ENCODE measurements at regions of chr2 and their contacts with region 1.

Region 1: GRCh38 chr2:102020596-102021181 is 28.9 kb downstream of the IL1R2 start:
- DNase-seq: peak; percentile 83
- H3K4me3 ChIP-seq: no peak overlapping the region
- H3K27ac ChIP-seq: no peak overlapping the region
- H3K4me1 ChIP-seq: no peaks in the 10 kb centered on the region
- H3K27me3 ChIP-seq: no peaks in the 10 kb centered on the region
- CTCF ChIP-seq: peak; percentile 95 to 97
- POLR2A ChIP-seq: no peak

Region 2: GRCh38 chr2:101770726-101771125 is 250.0 kb before region 1 on chr2:
- CTCF ChIA-PET with region 1: no interaction called
- POLR2A ChIA-PET with region 1: no interaction called
- dilution Hi-C with region 1: no loop called
- intact Hi-C with region 1: no loop called
- DNase-seq: peak; percentile 58
- H3K4me3 ChIP-seq: no peak overlapping the region
- H3K27ac ChIP-seq: peak overlapping the region; percentile 5
- H3K4me1 ChIP-seq: peaks cover 68% of the 10 kb centered on the region
- H3K27me3 ChIP-seq: no peaks in the 10 kb centered on the region
- CTCF ChIP-seq: peak in 1 of 2 donors; percentile 28
- POLR2A ChIP-seq: no peak

Region 3: GRCh38 chr2:101998896-101999789 is 21.5 kb before region 1 on chr2:
- CTCF ChIA-PET with region 1: interaction called, 20 read pairs
- POLR2A ChIA-PET with region 1: no interaction called
- dilution Hi-C with region 1: no loop called
- intact Hi-C with region 1: no loop called
- DNase-seq: no peak
- H3K4me3 ChIP-seq: no peak overlapping the region
- H3K27ac ChIP-seq: no peak overlapping the region
- H3K4me1 ChIP-seq: no peaks in the 10 kb centered on the region
- H3K27me3 ChIP-seq: peaks cover 9 to 10% of the 10 kb centered on the region in 2 experiments
- CTCF ChIP-seq: no peak
- POLR2A ChIP-seq: no peak

Region 4: GRCh38 chr2:102063941-102064678 is 43.4 kb after region 1 on chr2:
- CTCF ChIA-PET with region 1: interaction called, 21 read pairs
- POLR2A ChIA-PET with region 1: no interaction called
- dilution Hi-C with region 1: no loop called
- intact Hi-C with region 1: loop called (anchors 5 kb)
- DNase-seq: peak; percentile 86
- H3K4me3 ChIP-seq: no peak overlapping the region
- H3K27ac ChIP-seq: peak overlapping the region; percentile 50
- H3K4me1 ChIP-seq: peaks cover 17% of the 10 kb centered on the region
- H3K27me3 ChIP-seq: no peaks in the 10 kb centered on the region
- CTCF ChIP-seq: no peak
- POLR2A ChIP-seq: peak; percentile 3

Region 5: GRCh38 chr2:102141970-102142828 is 121.5 kb after region 1 on chr2 and contains the start of gene IL1R1:
- CTCF ChIA-PET with region 1: interaction called, 22 read pairs
- POLR2A ChIA-PET with region 1: no interaction called
- dilution Hi-C with region 1: no loop called
- intact Hi-C with region 1: no loop called
- DNase-seq: peak; percentile 73
- H3K4me3 ChIP-seq: peak within 1 kb of the TSS; percentile 56 to 63 (median 63)
- H3K27ac ChIP-seq: peak within 1 kb of the TSS; percentile 16
- H3K4me1 ChIP-seq: peaks cover 14% of the 10 kb centered on the region
- H3K27me3 ChIP-seq: no peaks in the 10 kb centered on the region
- CTCF ChIP-seq: no peak
- POLR2A ChIP-seq: peak; percentile 32
- total RNA-seq, gene IL1R1: 2.9 and 5.5 TPM in 2 replicates

Region 6: GRCh38 chr2:102187496-102188150 is 166.9 kb after region 1 on chr2:
- CTCF ChIA-PET with region 1: interaction called, 12 read pairs
- POLR2A ChIA-PET with region 1: no interaction called
- dilution Hi-C with region 1: no loop called
- intact Hi-C with region 1: loop called (anchors 2 kb)
- DNase-seq: peak; percentile 40
- H3K4me3 ChIP-seq: peak overlapping the region; percentile 34 to 47 (median 38)
- H3K27ac ChIP-seq: no peak overlapping the region
- H3K4me1 ChIP-seq: peaks cover 18% of the 10 kb centered on the region
- H3K27me3 ChIP-seq: no peaks in the 10 kb centered on the region
- CTCF ChIP-seq: peak in 1 of 2 donors; percentile 43
- POLR2A ChIP-seq: no peak

Region 7: GRCh38 chr2:102355526-102356380 is 335.1 kb after region 1 on chr2 and contains the start of gene IL18R1:
- CTCF ChIA-PET with region 1: interaction called, 11 read pairs
- POLR2A ChIA-PET with region 1: no interaction called
- dilution Hi-C with region 1: no loop called
- intact Hi-C with region 1: loop called (anchors 1 kb)
- DNase-seq: peak; percentile 71
- H3K4me3 ChIP-seq: peak within 1 kb of the TSS; percentile 70 to 88 (median 79)
- H3K27ac ChIP-seq: peak within 1 kb of the TSS; percentile 63
- H3K4me1 ChIP-seq: peaks cover 13% of the 10 kb centered on the region
- H3K27me3 ChIP-seq: no peaks in the 10 kb centered on the region
- CTCF ChIP-seq: peak; percentile 72 to 84
- POLR2A ChIP-seq: no peak
- total RNA-seq, gene IL18R1: 3.6 and 4.0 TPM in 2 replicates